ENCODE measurements at regions of chr21 and their contacts with region 1.

Region 1: DNA sequence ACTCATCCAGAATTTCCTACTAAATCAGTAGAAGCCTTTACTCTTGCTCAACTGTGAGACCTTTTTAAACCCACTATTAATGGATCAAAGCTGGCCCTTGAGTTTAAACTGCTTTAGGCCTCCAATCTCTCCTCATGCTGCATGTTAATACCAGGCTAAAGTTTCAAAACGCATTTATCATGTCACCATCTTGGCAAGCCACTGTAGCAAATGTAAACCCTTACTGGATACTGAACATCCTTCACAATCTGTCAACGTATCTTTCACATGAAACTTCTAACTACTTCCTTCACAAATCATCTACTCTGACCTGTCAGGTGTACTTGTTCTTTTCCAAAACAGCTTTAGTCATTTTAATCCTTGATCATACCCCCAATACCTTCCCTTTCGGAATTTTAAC is 3.0 kb downstream of the PAXBP1 start:
- DNase-seq: no peak
- H3K4me3 ChIP-seq: no peak overlapping the region
- H3K27ac ChIP-seq: no peak overlapping the region
- H3K4me1 ChIP-seq: no peaks in the 10 kb centered on the region
- H3K27me3 ChIP-seq: no peaks in the 10 kb centered on the region
- CTCF ChIP-seq: no peak

Region 2: DNA sequence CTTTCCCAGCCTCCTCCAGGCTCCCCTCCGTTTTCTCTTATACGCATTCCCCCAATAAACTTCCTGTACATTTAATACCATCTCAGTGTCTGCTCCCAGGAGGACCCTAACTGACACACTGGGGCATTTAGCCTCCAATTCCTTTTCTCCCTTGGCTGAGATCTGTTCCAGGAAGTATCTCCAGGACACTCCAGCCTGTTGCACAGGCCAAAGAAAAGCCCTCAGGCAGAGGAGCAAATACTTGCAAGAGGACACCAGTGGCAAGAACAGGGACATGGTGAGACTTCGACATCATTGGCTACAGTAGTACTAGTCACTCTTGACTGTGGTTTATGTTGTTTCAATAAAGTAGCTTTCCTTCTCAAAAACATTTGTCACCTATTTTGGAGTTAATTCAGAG is 36.0 kb before region 1 on chr21:
- intact Hi-C with region 1: loop called (anchors 5 kb)
- DNase-seq: no peak
- H3K4me3 ChIP-seq: no peak overlapping the region
- H3K27ac ChIP-seq: no peak overlapping the region
- H3K4me1 ChIP-seq: no peaks in the 10 kb centered on the region
- H3K27me3 ChIP-seq: no peaks in the 10 kb centered on the region
- CTCF ChIP-seq: no peak

Measured in colonic mucosa (tissue), 4 donors.